ENCODE measurements at regions of chr5 and their contacts with region 1.

Region 1: DNA sequence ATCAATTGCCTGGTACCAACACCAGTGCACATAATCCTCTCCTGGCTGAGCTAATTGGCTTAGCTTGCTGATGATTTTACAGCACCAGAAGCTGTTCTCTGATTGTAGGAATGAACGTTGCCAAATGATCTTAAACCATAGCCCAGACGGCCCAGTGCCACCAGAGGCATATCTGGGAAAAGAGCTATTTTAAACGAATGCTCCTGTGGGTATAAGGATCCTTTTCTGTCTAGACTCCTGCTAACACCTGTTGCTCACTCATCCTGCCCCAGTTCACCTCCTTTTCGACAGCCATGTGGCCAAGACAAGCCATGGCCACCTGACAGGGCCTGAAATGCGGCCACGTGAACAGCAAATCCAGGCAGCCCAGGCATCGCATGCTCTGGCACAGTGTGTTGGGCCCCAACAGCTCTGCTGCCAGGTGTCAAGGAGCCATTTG is 289.9 kb upstream of the SLC30A5 start:
- DNase-seq: peak; percentile 69 to 80
- ATAC-seq: peak; percentile 88 to 90
- H3K4me3 ChIP-seq: no peak overlapping the region
- H3K27ac ChIP-seq: peak overlapping the region; percentile 67 to 83 (median 74)
- H3K4me1 ChIP-seq: peaks cover 38 to 40% of the 10 kb centered on the region in 2 donors
- H3K27me3 ChIP-seq: no peaks in the 10 kb centered on the region
- CTCF ChIP-seq: no peak
- POLR2A ChIP-seq: no peak

Region 2: DNA sequence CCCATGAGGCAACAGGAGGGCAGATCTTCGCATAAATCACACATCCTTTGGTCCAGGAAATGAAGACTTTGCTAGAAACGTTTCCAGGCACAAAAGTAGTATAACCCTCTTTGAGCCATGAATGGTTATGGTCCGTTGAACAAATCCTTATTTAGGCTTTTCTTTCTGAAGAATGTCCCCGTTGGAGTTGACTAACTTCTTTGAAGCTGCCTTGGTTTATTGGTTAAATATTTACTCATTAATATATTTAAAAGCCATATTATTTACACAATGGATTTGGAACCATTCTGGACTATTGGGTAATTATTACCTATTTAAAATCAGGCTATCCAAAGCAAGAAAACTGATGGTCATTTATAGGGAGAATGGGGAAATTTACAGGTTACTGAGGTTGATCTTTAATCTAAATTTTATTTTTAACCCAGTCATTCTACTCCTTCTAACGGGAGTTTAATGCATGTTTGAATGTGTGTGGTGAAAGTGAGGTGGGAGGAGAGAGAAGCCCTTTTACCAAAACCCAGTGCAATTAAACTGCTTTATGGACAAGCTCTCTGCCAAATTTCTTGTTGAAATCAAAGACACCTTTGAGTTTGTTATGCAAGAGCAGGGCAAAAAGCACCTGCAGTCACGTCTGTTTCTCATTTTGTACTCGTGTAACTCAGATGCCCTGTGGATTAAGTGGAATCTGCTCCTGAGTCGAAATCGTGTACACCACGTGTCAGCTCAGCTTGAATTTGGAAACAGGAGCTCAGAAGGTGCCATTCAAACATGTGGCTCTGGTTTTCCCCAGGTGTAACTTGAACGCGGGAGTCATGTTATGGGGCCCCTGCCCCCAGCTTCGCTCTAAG is 57.5 kb before region 1 on chr5:
- in situ Hi-C with region 1: no loop called
- intact Hi-C with region 1: loop called (anchors 1 kb)
- DNase-seq: peak; percentile 46 to 61
- ATAC-seq: peak; percentile 93
- H3K4me3 ChIP-seq: peak overlapping the region in 1 of 4 donors; percentile 15
- H3K27ac ChIP-seq: peak overlapping the region in 3 of 4 donors; percentile 54 to 80 (median 74)
- H3K4me1 ChIP-seq: peaks cover 22 to 31% of the 10 kb centered on the region in 2 donors
- H3K27me3 ChIP-seq: no peaks in the 10 kb centered on the region
- CTCF ChIP-seq: peak in 1 of 5 experiments; percentile 30
- POLR2A ChIP-seq: no peak